Activated B cell treated with CpG ODN at 0.5 μM for 24 hours (primary cell): ENCODE measurements at regions of chr17 and their contacts with region 1.

Region 1: GRCh38 chr17:18038861-18039534 is at the starts of genes ATPAF2 and GID4:
- DNase-seq: peak; percentile 99
- ATAC-seq: peak; percentile 87
- H3K4me3 Mint-ChIP-seq: peak within 1 kb of the TSS; percentile 94
- H3K27ac Mint-ChIP-seq: peak within 1 kb of the TSS; percentile 92
- H3K4me1 Mint-ChIP-seq: peaks cover 54% of the 10 kb centered on the region
- H3K27me3 Mint-ChIP-seq: no peaks in the 10 kb centered on the region
- CTCF ChIP-seq: no peak
- total RNA-seq, gene ATPAF2: 60.7 and 69.1 TPM in 2 replicates
- total RNA-seq, gene GID4: 6.8 and 7.3 TPM in 2 replicates

Region 2: GRCh38 chr17:17303010-17303846 is 735.8 kb before region 1 on chr17 and contains the start of gene NT5M:
- CTCF ChIA-PET with region 1: no interaction called
- POLR2A ChIA-PET with region 1: no interaction called
- intact Hi-C with region 1: loop called (anchors 10 kb)
- DNase-seq: peak; percentile 73
- ATAC-seq: peak; percentile 76
- H3K4me3 Mint-ChIP-seq: peak within 1 kb of the TSS; percentile 87
- H3K27ac Mint-ChIP-seq: peak within 1 kb of the TSS; percentile 61
- H3K4me1 Mint-ChIP-seq: peaks cover 34% of the 10 kb centered on the region
- H3K27me3 Mint-ChIP-seq: no peaks in the 10 kb centered on the region
- CTCF ChIP-seq: no peak
- total RNA-seq, gene NT5M: 0.71 and 0.93 TPM in 2 replicates

Region 3: DNA sequence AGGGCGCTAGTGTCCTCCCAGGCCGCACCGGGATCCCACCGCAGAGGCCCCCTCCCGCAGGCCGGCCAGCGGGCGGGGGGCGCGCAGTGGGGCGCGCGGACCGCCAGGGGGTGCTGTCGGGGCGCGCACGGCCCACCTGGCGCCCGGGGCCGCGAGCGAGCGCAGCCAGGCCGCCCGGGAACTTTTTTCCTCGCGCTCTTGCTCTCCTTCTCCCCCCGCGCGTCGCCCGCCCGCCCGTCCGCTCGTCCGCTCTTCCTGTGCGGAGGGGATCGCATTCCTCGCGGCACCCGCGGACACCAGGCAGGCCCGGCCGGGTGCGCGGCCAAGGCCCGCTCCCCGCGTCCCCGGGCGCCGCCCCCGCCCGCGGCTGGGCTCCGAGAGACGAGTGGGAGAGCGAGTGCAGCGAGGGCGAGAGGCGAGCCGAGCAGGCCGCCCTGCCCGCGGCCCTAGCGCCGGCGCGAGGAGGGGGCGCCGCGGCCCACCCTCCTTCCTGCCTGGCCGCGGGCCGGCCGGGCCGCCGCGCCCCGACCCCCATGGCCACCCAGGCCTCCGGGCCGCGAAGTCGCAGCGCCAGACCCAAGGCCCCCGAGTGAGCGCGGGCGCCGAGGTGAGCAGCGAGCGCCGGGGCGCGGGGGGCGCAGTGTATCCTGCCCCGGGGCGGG is 357.7 kb before region 1 on chr17 and contains the start of gene RAI1:
- CTCF ChIA-PET with region 1: interaction called, 6 read pairs
- POLR2A ChIA-PET with region 1: interaction called, 3 read pairs
- intact Hi-C with region 1: loop called (anchors 2 kb)
- DNase-seq: peak; percentile 84
- ATAC-seq: peak; percentile 63
- H3K4me3 Mint-ChIP-seq: peak within 1 kb of the TSS; percentile 91
- H3K27ac Mint-ChIP-seq: peak within 1 kb of the TSS; percentile 81
- H3K4me1 Mint-ChIP-seq: peaks cover 24% of the 10 kb centered on the region
- H3K27me3 Mint-ChIP-seq: no peaks in the 10 kb centered on the region
- CTCF ChIP-seq: no peak
- total RNA-seq, gene RAI1: 26.7 and 31.2 TPM in 2 replicates

Region 4: DNA sequence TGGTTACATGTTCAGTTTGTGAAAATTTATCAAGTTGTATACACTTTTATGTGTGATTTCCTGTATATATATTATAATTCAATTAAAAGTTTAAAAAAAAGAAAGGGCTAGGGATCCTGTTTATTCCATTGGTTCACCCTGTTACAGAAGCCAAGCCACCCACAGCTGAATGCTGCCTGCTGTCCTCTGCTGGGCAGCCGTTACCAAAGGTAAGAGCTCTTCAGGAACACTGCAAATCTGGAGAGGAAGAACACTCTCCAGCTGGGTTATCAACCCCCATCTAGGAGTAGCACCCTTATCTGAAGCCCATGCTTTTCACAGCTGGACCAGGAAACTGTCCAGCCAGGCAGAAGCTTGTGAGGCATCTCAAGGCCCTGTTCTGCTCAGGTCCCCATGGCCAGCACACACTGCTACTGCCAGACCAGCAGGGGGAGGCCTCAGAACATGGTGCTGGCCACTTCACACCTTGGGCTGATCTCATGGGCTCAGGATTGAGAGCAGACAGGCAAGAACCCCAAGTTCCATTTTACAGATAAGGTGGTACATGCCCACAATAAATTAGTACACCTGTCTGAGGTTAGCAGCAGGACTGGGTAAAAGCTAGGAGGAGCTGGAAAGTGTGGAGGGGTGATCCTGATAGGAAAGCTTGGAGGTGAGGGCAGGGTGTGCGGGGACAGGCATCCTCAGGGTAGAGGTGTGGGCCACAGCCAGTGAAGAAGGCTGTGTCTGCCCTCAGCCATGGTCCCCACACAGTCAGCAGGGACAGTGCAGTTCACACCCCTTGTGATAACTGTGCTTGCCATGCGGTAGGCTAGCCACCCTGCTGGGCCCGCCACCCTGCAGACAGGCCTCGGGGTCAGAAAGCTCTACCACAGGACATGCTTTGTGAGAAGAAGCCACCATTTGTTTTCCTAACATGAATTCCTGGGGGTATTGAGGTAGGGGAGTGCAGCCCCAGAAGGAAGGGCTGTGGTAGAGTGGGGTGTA is 147.9 kb before region 1 on chr17:
- CTCF ChIA-PET with region 1: no interaction called
- POLR2A ChIA-PET with region 1: no interaction called
- intact Hi-C with region 1: loop called (anchors 2 kb)
- DNase-seq: no peak
- ATAC-seq: no peak
- H3K4me3 Mint-ChIP-seq: no peak overlapping the region
- H3K27ac Mint-ChIP-seq: no peak overlapping the region
- H3K4me1 Mint-ChIP-seq: peaks cover 9% of the 10 kb centered on the region
- H3K27me3 Mint-ChIP-seq: no peaks in the 10 kb centered on the region
- CTCF ChIP-seq: no peak

Region 5: DNA sequence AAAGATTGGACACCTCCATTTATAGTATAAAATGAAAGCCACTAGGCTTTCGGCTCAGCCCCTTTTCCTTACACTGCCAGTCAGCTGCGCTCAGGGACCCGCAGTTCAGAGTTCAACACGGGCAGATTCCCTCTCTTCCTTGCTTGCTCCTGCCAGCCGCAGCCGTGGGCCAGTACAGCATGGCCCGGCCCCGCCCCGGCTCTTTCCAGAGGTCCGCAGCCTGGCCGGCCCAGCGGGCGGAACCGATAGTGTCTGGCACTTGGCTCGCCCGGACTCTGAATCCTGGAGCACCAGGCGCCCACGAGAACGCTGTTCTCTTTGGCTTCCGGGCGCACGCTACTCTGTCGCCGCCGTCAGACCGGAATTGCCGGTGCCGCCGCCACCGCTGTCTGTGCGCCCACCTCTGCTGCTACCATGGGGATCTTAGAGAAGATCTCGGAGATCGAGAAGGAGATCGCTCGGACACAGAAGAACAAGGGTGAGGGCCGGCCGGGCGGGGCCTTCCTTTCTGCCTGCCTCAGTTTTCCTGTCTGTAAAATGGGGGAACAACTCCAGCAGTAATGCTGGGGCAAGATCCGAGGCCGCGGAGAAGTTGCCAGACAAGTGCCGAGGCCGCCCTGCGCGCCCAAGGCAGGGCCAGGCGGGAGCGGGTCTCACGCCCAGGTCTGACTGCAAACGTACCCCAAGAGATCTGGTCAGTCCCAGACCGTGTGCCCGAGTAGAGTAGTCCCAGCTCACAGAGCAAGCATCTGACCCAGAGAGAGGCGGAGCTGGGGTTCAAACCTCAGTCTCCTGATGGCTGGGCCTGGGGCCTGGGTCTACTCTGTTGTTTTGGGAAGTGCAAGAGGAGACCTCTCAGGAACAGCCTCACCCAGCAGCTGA is 48.9 kb after region 1 on chr17 and contains the start of gene DRG2:
- CTCF ChIA-PET with region 1: no interaction called
- POLR2A ChIA-PET with region 1: no interaction called
- intact Hi-C with region 1: loop called (anchors 2 kb)
- DNase-seq: peak; percentile 93
- ATAC-seq: peak; percentile 95
- H3K4me3 Mint-ChIP-seq: peak within 1 kb of the TSS; percentile 99
- H3K27ac Mint-ChIP-seq: peak within 1 kb of the TSS; percentile 95
- H3K4me1 Mint-ChIP-seq: peaks cover 26% of the 10 kb centered on the region
- H3K27me3 Mint-ChIP-seq: no peaks in the 10 kb centered on the region
- CTCF ChIP-seq: no peak
- total RNA-seq, gene DRG2: 55.7 and 67.1 TPM in 2 replicates

Region 6: GRCh38 chr17:18183334-18184142 is 144.5 kb after region 1 on chr17 and contains the start of gene ALKBH5:
- CTCF ChIA-PET with region 1: no interaction called
- POLR2A ChIA-PET with region 1: no interaction called
- intact Hi-C with region 1: loop called (anchors 2 kb)
- DNase-seq: peak; percentile 98
- ATAC-seq: peak; percentile 82
- H3K4me3 Mint-ChIP-seq: peak within 1 kb of the TSS; percentile 98
- H3K27ac Mint-ChIP-seq: peak within 1 kb of the TSS; percentile 99
- H3K4me1 Mint-ChIP-seq: peaks cover 47% of the 10 kb centered on the region
- H3K27me3 Mint-ChIP-seq: no peaks in the 10 kb centered on the region
- CTCF ChIP-seq: no peak
- total RNA-seq, gene ALKBH5: 72.8 and 74.6 TPM in 2 replicates

Region 7: GRCh38 chr17:18314731-18315561 is 275.9 kb after region 1 on chr17 and contains the starts of genes SMCR8 and TOP3A:
- CTCF ChIA-PET with region 1: no interaction called
- POLR2A ChIA-PET with region 1: no interaction called
- intact Hi-C with region 1: loop called (anchors 5 kb)
- DNase-seq: peak; percentile 91
- ATAC-seq: peak; percentile 94
- H3K4me3 Mint-ChIP-seq: peak within 1 kb of the TSS; percentile 100
- H3K27ac Mint-ChIP-seq: peak within 1 kb of the TSS; percentile 100
- H3K4me1 Mint-ChIP-seq: peaks cover 77% of the 10 kb centered on the region
- H3K27me3 Mint-ChIP-seq: no peaks in the 10 kb centered on the region
- CTCF ChIP-seq: no peak
- total RNA-seq, gene SMCR8: 32.5 and 36.9 TPM in 2 replicates
- total RNA-seq, gene TOP3A: 44.8 and 46.4 TPM in 2 replicates

Region 8: DNA sequence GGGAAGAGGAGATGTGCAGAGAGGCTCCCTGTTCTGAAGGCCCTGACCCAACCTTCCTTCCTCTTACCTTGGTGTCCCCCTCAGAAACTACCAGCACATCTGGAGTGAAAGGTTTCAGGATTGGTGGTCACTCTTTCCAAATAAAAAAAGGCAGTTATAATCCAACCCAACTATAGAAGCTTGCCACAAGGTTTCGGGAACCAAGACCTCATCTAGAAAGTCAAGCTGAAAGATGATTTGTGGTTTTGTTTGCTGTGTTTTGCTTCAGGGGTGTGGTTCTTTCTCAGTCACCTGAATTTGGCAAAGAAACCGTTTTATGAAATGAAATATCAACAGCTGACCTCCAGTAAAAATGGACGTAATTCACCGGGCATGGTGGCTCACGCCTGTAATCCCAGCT is 305.0 kb after region 1 on chr17:
- CTCF ChIA-PET with region 1: no interaction called
- POLR2A ChIA-PET with region 1: no interaction called
- intact Hi-C with region 1: no loop called
- DNase-seq: no peak
- ATAC-seq: no peak
- H3K4me3 Mint-ChIP-seq: no peak overlapping the region
- H3K27ac Mint-ChIP-seq: no peak overlapping the region
- H3K4me1 Mint-ChIP-seq: no peaks in the 10 kb centered on the region
- H3K27me3 Mint-ChIP-seq: no peaks in the 10 kb centered on the region
- CTCF ChIP-seq: no peak